OCI-LY7 (cell line): ENCODE measurements at regions of chr10 and their contacts with region 1.

Region 1: GRCh38 chr10:110210674-110211464 is 3.5 kb downstream of the MXI1 start:
- DNase-seq: peak; percentile 97
- H3K4me3 ChIP-seq: peak overlapping the region; percentile 79
- H3K27ac ChIP-seq: peak overlapping the region; percentile 56
- H3K4me1 ChIP-seq: peaks cover 55% of the 10 kb centered on the region
- CTCF ChIP-seq: peak; percentile 21; the same call in 1 of the 2 replicates

Region 2: GRCh38 chr10:109914966-109915365 is 295.9 kb before region 1 on chr10:
- CTCF ChIA-PET with region 1: no interaction called
- POLR2A ChIA-PET with region 1: interaction called, 5 read pairs
- intact Hi-C with region 1: loop called (anchors 5 kb)
- DNase-seq: peak; percentile 81
- H3K4me3 ChIP-seq: peak overlapping the region; percentile 40
- H3K27ac ChIP-seq: peak overlapping the region; percentile 98
- H3K4me1 ChIP-seq: peaks cover 88% of the 10 kb centered on the region
- CTCF ChIP-seq: no peak

Region 3: DNA sequence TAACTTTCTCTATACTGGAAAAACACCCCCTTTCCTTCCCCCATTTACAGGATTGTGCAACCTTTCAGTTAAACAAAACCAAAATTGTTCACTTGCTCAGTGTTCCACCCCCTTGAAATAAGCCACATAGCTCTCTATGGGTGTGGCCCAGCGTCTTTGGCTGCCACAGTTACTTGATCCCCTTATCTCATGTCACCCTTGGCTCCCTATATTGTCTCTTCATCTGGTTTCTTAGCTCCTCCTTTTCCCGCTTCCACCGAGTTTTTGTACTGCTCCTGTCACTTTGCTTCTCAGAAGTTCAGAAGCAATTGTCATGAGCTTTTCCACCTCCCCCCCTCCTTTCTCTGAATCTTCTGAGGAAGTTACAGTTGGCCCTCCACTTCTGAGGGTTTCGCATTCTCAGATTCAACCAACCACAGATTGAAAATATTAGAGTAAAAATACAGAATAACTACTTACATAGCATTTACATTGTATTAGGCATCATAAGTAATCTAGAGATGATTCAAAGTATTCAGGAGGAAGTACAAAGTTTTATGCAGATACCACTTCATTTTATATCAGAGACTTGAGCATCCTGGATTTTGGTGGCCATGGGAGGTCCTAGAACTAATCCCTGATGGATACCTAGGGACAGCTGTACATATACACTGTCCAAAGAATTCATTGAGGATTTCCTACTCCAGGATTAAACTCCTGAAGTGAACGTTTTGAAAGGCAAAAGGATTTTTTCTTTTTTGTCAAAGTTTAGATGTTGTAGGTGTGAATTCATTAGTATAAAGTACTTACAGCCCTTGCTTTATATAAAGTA is 142.7 kb before region 1 on chr10:
- CTCF ChIA-PET with region 1: no interaction called
- POLR2A ChIA-PET with region 1: no interaction called
- intact Hi-C with region 1: loop called (anchors 5 kb)
- DNase-seq: peak; percentile 28
- H3K4me3 ChIP-seq: no peak overlapping the region
- H3K27ac ChIP-seq: no peak overlapping the region
- H3K4me1 ChIP-seq: peaks cover 66% of the 10 kb centered on the region
- CTCF ChIP-seq: no peak

Region 4: GRCh38 chr10:110225756-110226542 is 15.1 kb after region 1 on chr10:
- CTCF ChIA-PET with region 1: interaction called, 4 read pairs
- POLR2A ChIA-PET with region 1: interaction called, 53 read pairs
- intact Hi-C with region 1: loop called (anchors 1 kb)
- DNase-seq: peak; percentile 93
- H3K4me3 ChIP-seq: peak overlapping the region; percentile 79
- H3K27ac ChIP-seq: peak overlapping the region; percentile 72
- H3K4me1 ChIP-seq: peaks cover 22% of the 10 kb centered on the region
- CTCF ChIP-seq: peak; percentile 55; the same call in 1 of the 2 replicates

Region 5: DNA sequence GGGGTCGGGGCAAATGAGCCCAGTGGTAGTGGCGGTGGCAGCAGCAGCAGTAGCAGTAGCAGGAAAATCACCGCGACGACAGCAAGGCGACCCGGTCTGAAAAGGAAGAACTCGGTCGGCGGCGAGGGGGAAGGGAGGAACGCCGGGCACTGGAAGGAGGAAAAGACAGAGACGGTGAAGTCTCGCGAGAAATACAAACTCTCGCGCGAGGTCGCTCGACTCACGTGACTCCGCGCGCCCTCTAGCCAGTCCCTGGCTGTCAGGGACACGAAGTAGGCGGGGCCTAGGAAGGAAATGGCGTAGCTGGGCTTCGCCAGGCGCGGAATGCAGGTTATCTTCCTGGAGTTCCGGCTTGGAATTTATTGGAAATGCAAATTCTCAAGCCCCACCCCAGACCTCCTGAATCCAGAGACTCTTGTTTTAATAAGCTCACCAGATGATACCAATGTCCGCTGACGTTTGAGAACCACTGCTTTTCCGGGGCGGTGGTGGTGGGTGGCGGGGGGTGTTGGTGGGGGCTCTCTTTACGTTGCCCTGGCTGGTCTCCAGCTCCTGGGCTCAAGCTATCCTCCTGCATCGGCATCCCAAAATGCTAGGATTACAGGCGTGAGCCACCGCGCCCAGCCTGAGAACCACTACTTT is 94.0 kb after region 1 on chr10 and contains the start of gene SMNDC1:
- CTCF ChIA-PET with region 1: no interaction called
- POLR2A ChIA-PET with region 1: interaction called, 10 read pairs
- intact Hi-C with region 1: loop called (anchors 2 kb)
- DNase-seq: peak; percentile 99
- H3K4me3 ChIP-seq: peak within 1 kb of the TSS; percentile 99
- H3K27ac ChIP-seq: peak within 1 kb of the TSS; percentile 69
- H3K4me1 ChIP-seq: peaks cover 49% of the 10 kb centered on the region
- CTCF ChIP-seq: no peak
- total RNA-seq, gene SMNDC1: 8.1 and 10.0 TPM in 2 replicates

Region 6: DNA sequence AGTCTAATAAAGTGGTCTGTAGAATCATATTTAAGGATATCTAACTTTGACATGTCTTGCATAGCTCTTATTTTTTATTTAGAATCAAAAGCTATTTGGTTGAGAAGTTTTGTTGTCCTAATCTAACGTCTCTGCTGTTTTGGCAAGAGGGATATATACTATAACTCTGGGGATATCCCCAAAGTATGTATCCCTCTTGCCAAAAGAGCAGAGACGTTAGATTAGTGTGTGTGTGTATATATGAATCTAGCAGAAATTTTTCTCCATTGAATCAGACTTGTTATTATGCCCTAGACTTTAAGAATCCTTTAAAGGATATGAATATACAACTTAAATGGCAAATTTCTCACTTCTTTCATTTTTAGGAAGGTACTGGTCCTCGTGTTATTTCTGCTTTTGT is 366.2 kb after region 1 on chr10:
- CTCF ChIA-PET with region 1: no interaction called
- POLR2A ChIA-PET with region 1: interaction called, 10 read pairs
- intact Hi-C with region 1: no loop called
- DNase-seq: no peak
- H3K4me3 ChIP-seq: no peak overlapping the region
- H3K27ac ChIP-seq: no peak overlapping the region
- H3K4me1 ChIP-seq: peaks cover 25% of the 10 kb centered on the region
- CTCF ChIP-seq: no peak